ENCODE measurements at regions of chr19 and their contacts with region 1.

Region 1: DNA sequence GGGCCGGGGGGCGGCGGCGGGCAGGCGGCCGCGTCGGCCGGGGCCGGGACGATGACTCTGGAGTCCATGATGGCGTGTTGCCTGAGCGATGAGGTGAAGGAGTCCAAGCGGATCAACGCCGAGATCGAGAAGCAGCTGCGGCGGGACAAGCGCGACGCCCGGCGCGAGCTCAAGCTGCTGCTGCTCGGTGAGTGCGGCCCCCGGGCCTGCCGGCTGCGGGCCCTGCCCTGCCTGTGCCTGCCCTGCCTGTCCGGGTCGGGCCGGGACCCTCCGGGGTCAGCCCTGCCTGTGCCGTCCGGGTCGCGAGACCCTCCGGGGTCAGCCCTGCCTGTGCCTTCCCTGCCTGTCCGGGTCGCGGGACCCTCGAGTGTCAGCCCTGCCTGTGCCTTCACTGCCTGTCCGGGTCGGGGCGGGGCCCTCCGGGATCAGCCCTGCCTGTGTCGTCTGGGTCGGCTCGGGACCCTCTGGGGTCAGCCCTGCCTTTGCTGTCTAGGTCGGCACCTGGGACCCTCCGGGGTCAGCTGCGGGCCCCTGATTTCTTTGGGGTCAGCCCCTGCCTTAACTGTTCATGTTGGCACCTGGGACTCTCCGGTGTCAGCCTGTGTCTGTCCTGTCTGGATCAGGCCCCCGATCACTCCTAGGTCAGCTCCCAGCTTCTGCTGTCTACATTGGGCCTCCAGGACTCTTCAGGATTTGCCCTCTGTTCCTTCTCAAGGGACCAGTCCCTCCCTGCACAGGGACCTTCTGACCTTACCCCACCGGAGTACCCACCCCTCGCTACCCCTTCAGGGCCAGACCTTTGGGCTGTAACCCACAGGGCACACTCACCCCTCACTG is 657 bp downstream of the GNA11 start:
- DNase-seq: no peak
- H3K4me3 ChIP-seq: peak overlapping the region; percentile 80 to 88
- H3K27ac ChIP-seq: no peak overlapping the region; a peak in 2 of 4 replicates
- H3K4me1 ChIP-seq: peaks cover 0 to 22% of the 10 kb centered on the region in 2 experiments; a peak in 1 of 4 replicates
- H3K27me3 ChIP-seq: no peaks in the 10 kb centered on the region
- CTCF ChIP-seq: no peak
- EP300 ChIP-seq: no peak
- RAD21 ChIP-seq: no peak

Region 2: DNA sequence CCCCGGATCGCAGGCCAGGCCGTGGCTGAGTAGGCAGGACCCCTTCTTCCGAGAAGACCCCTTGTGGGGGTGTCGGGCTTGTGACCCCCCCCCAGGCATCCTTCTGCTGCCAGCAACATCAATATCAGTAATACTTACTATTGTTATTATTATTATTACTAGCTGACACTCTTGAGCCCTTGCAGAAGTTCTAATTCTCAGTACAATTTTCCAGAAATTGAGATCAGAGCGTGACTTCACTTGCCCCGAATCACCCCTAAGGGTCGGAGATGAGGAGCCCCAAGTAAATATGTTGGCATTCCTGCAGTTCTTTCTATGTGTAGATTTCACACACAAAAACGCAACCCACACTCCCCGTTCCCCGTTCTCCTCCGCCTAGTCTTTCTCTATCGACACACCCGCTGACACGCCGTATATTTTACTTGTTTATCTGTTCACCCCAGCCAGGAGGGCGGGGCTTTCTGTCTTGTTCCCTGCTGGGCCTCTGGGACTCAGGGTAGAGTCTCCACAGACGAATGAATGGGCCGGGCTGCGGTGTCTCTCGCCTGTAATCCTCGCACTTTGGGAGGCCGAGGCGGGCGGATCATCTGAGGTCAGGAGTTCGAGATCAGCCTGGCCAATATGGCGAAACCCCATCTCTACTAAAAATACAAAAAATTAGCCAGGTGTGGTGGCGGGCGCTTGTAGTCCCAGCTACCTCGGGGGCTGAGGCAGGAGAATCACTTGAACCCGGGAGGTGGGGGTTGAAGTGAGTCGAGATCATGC is 47.2 kb before region 1 on chr19:
- CTCF ChIA-PET with region 1: no interaction called
- POLR2A ChIA-PET with region 1: no interaction called
- DNase-seq: peak; percentile 67
- H3K4me3 ChIP-seq: peak overlapping the region; percentile 17 to 54; a peak in 3 of 4 replicates
- H3K27ac ChIP-seq: no peak overlapping the region
- H3K4me1 ChIP-seq: no peaks in the 10 kb centered on the region; a peak in 1 of 4 replicates
- H3K27me3 ChIP-seq: no peaks in the 10 kb centered on the region
- CTCF ChIP-seq: no peak
- EP300 ChIP-seq: no peak
- RAD21 ChIP-seq: no peak

Region 3: GRCh38 chr19:3108775-3109174 is 14.0 kb after region 1 on chr19:
- CTCF ChIA-PET with region 1: interaction called, 28 read pairs
- POLR2A ChIA-PET with region 1: no interaction called
- DNase-seq: peak; percentile 84
- H3K4me3 ChIP-seq: no peak overlapping the region
- H3K27ac ChIP-seq: no peak overlapping the region
- H3K4me1 ChIP-seq: no peaks in the 10 kb centered on the region
- H3K27me3 ChIP-seq: no peaks in the 10 kb centered on the region
- CTCF ChIP-seq: peak; percentile 85
- EP300 ChIP-seq: no peak
- RAD21 ChIP-seq: peak; percentile 63

Measured in SK-N-SH (cell line).